Activated T-helper 2 cell treated with anti-CD3 and anti-CD28 coated beads, Interferon-gamma antibody, Interleukin-2, Interleukin-4, amounts not matched to agents 10 μg/mL and 5 μg/mL and 100 μg/mL, durations not matched to agents 14 hours and 24 hours and 36 hours (primary cell): ENCODE measurements at regions of chr1 and their contacts with region 1.

Region 1: DNA sequence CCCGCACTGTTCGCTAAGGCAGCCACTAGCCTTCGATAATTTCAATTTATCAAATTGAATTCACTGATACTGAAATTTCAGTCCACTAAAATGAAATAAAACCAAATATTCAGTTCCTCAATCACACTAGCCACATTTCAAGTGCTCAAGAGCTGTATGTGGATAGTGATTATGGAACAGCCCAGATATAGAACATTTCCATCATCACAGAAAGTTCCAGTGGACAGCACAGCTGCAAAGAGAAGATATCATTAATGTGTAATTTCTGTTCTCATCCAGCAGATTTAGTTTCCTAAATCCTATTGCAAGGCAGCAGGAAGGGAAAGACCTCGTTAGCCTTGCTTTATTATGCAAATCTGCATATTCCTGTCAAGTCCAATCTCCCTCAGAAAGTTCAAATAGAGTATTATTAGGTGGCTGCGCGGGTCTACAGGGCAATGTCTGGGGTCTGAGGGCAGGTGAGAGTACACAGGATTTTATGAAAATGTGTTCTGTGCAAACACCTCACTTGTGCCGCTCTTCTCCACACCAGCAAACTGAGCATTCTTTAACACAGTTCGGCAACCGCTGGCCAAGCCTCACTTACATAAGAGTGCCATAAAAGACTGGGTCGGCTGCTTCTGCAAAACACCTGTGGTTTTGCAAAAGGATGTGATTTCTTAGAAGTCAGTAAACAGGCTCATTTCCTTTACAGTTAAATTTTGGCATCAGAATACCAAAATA is 22.4 kb downstream of the CAPZB start:
- DNase-seq: peak; percentile 62
- H3K4me3 Mint-ChIP-seq: peak overlapping the region; percentile 75
- H3K27ac Mint-ChIP-seq: peak overlapping the region; percentile 65
- H3K4me1 Mint-ChIP-seq: peaks cover 77% of the 10 kb centered on the region
- H3K27me3 Mint-ChIP-seq: no peaks in the 10 kb centered on the region

Region 2: DNA sequence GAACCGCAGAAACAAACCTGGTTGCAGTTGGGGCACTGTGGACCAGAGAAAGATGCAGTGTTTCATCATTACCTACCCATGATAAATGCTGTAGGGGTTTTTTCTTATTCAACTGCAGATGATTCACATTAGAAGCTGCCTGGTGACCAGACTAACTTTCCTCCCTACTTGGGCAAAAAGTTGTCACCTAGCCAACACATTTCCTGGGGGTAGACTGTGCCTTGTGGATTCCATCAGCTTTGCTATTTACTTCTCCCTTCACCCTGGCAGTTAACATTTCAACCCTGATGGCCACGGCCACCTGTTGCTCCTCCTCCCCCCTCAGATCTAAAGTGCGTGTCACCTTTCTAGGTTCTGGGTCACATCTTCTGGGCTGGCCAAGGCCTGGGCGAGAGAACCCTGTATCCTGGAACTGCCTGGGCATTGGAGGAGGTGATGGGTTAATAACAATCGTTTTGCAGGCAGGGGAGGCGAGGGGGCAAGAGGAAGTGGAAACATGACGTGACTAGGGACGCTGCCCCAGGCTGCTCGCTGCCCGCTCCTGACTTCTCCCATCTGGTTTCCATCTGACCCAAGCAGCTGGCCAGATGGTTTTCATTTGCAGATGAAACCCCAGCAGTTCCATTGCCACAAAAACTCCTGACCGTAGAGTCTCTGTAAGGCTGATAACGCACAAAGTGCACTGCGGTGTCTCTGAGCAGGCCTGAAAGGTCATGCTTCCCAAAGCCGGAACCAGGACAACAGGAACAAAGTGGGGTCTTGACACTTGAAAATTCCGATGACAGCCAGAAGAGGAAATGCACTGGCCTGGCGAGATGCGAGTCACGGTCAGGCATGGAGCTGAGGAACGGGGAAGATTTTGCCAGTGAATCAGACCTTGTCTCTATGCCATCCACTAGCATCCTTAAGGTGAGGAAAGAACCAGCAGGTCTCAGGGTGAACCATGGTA is 14.2 kb before region 1 on chr1:
- intact Hi-C with region 1: loop called (anchors 1 kb)
- DNase-seq: no peak
- H3K4me3 Mint-ChIP-seq: no peak overlapping the region
- H3K27ac Mint-ChIP-seq: peak overlapping the region; percentile 85
- H3K4me1 Mint-ChIP-seq: peaks cover 64% of the 10 kb centered on the region
- H3K27me3 Mint-ChIP-seq: no peaks in the 10 kb centered on the region

Region 3: GRCh38 chr1:19477284-19478249 is 14.6 kb after region 1 on chr1:
- intact Hi-C with region 1: loop called (anchors 2 kb)
- DNase-seq: no peak
- H3K4me3 Mint-ChIP-seq: peak overlapping the region; percentile 70
- H3K27ac Mint-ChIP-seq: peak overlapping the region; percentile 90
- H3K4me1 Mint-ChIP-seq: peaks cover 84% of the 10 kb centered on the region
- H3K27me3 Mint-ChIP-seq: no peaks in the 10 kb centered on the region